Pancreas (tissue), 10 donors: ENCODE measurements at regions of chr5 and their contacts with region 1.

Region 1: GRCh38 chr5:142716963-142717362 is 31.1 kb upstream of the FGF1 start:
- DNase-seq: peak in 4 of 6 donors; percentile 25 to 56 (median 34)
- ATAC-seq: peak; percentile 16 to 63 (median 54)
- H3K4me3 ChIP-seq: no peak overlapping the region
- H3K27ac ChIP-seq: no peak overlapping the region
- H3K4me1 ChIP-seq: peaks cover 0 to 15% (median 0%) of the 10 kb centered on the region in 3 donors
- H3K27me3 ChIP-seq: no peaks in the 10 kb centered on the region
- CTCF ChIP-seq: no peak

Region 2: GRCh38 chr5:142334538-142334937 is 382.4 kb before region 1 on chr5:
- intact Hi-C with region 1: no loop called
- DNase-seq: no peak
- ATAC-seq: no peak
- H3K4me3 ChIP-seq: no peak overlapping the region
- H3K27ac ChIP-seq: no peak overlapping the region
- H3K4me1 ChIP-seq: no peaks in the 10 kb centered on the region
- H3K27me3 ChIP-seq: no peaks in the 10 kb centered on the region
- CTCF ChIP-seq: no peak

Region 3: GRCh38 chr5:142432369-142432863 is 284.5 kb before region 1 on chr5:
- intact Hi-C with region 1: no loop called
- DNase-seq: peak in 4 of 6 donors; percentile 9 to 33 (median 20)
- ATAC-seq: peak in 3 of 4 donors; percentile 56 to 79 (median 67)
- H3K4me3 ChIP-seq: no peak overlapping the region
- H3K27ac ChIP-seq: no peak overlapping the region
- H3K4me1 ChIP-seq: no peaks in the 10 kb centered on the region
- H3K27me3 ChIP-seq: no peaks in the 10 kb centered on the region
- CTCF ChIP-seq: no peak

Region 4: GRCh38 chr5:142453932-142454331 is 263.0 kb before region 1 on chr5:
- intact Hi-C with region 1: no loop called
- DNase-seq: no peak
- ATAC-seq: no peak
- H3K4me3 ChIP-seq: no peak overlapping the region
- H3K27ac ChIP-seq: no peak overlapping the region
- H3K4me1 ChIP-seq: no peaks in the 10 kb centered on the region
- H3K27me3 ChIP-seq: no peaks in the 10 kb centered on the region
- CTCF ChIP-seq: no peak

Region 5: DNA sequence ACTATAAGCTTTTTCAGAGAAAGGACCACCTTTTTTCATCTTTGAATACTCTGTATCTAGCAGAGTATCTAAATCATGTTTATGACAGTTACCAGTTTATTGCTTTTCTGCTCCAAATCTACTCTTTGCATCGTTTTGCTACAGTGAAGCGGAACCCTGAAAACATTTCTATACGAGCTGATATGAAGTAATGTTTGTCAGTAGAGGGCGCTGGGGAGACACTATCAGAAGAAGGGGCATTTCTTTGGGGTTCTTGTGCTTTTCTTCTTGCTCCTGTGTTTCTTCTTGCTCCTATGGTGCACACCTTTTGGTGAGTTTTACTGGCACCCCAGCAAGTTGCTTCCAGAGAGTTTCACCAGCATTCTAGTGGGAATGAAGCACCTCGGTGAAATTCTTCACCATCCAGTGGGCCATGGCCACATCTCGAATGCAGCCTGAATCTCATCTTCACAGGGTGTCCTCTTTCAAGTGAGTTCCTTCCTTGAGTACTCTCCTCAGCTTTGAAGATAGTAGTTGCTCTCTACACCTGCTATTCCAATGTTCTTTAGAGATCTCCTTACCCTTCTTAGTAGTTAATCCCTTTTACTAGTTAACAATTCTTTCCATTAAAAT is 129.5 kb before region 1 on chr5:
- intact Hi-C with region 1: no loop called
- DNase-seq: no peak
- ATAC-seq: no peak
- H3K4me3 ChIP-seq: no peak overlapping the region
- H3K27ac ChIP-seq: no peak overlapping the region
- H3K4me1 ChIP-seq: no peaks in the 10 kb centered on the region
- H3K27me3 ChIP-seq: no peaks in the 10 kb centered on the region
- CTCF ChIP-seq: no peak

Region 6: DNA sequence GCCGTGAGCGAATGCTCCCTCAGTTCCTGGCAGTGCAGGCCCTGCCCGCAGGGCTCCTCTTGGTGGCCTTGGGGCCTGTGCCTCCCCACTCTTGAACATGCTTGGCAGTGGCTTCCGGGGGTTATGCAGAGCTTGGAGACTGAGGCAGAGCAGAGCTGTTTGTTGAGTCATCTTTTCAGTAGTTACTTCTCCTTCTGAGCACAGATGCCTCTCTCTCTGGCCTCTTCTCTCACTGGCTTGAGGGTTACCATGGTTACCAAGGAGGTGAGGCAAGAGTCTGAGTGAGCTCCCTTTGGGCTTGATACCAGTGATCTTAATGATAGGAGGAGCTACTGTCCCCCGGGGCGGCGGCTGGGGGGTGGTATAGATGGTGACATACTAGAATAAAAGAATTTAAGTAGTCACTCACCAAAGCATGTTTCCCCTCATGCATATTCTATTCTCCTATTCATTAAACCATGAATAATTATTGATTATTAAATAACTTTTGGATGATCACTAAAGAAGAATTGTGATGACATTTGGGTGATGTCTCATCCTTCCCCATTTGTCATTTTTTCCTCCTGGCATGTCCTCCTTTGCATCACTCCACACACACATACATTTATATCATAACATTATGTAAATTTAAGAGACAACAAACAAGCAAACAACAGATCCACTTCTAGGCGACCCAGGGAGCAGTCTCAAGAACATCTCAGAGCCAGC is 164.3 kb after region 1 on chr5:
- intact Hi-C with region 1: loop called in 2 of 3 experiments (anchors 5 kb)
- DNase-seq: no peak
- ATAC-seq: peak in 3 of 4 donors; percentile 31 to 52 (median 34)
- H3K4me3 ChIP-seq: no peak overlapping the region
- H3K27ac ChIP-seq: no peak overlapping the region
- H3K4me1 ChIP-seq: peaks cover 0 to 9% (median 0%) of the 10 kb centered on the region in 3 donors
- H3K27me3 ChIP-seq: no peaks in the 10 kb centered on the region
- CTCF ChIP-seq: no peak